ENCODE measurements at regions of chr11 and their contacts with region 1.

Region 1: DNA sequence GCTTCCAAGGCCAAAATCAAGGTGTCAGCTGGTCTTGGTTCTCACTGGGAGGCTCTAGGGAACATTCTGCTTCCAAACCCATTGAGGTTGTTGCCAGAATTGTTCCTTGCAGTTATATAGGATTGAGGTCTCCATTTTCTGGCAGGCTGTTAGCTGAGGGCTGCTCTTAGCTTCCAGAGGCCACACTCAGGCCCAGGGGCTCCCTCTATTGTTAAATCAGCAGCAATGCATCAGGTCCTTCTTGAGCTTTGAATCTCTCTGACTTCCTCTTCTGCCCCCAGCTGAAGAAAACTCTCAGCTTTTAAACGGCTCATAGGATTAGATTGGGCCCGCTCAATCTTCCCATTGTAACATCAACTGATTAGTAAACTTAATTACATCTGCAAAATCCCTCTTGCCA is 39.3 kb upstream of the BSX start:
- DNase-seq: peak in 1 of 10 donors; percentile 13

Region 2: DNA sequence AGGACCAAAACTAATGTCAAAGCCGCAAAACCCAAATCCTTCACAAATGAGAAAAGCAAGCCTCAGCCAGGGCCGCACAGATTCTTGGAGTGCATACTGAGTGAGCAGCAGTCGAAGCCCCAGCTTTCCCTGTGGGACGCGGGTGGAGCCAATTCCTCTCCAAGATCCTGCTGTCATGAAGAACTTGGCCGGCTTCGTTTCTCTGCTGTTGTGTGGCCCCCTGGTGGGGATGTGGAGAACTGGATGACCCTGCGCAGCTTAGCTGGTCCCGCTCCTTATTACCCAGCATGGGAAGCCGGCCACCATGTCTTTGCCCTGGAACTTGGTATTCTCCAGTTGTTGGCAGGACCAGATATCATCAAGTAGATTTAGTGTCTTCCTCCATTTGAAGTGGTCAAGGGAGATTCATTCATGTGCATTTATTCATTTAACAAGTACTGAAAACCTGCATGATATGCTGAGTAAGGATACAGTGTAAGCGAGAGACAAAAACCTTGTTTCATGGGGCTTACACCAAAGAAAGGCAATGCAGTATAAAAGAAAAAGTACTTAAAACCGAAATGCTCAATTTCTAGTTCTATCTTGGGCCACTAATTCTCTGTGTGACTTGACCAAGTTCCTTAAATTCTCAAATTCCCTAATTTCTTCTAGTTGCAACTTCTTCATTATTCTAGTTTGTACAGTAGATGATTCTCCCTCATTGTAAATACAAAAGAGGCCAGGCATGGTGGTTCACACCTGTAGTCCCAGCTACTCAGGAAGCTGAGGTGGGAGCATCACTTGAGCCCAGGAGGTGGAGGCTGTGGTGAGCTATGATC is 239.4 kb before region 1 on chr11:
- intact Hi-C with region 1: no loop called
- DNase-seq: peak; percentile 73 to 98 (median 89)

Region 3: DNA sequence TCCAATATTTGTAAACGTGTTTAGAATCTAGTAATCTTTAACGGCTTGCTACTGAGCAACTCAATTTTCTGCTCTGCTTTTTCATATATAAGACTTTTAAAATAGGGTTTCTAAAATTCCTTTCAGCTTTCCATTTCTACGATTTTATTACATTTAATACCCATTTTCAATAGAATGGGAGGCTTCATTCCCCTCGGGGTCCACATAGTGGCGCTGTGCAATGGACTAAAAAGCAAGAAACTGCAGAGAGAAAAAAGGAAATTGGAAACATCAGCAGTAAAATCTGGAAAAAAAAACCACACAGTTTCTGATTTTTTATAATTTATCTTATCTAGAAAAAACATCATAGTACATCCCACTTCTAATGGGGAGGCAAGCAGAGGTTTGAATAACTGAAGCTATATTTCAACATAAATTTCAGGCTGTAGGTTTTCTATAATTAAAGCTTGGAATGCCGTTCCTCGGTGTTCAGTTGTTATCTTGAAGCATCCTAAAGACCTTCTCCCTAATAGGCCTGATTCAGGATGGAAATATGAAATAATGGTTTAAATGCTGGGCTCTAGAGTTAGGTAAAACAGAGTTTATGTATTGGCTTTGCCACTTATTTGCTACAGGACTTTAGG is 157.2 kb before region 1 on chr11:
- intact Hi-C with region 1: loop called (anchors 2 kb)
- DNase-seq: peak in 9 of 10 donors; percentile 33 to 92 (median 56)

Region 4: DNA sequence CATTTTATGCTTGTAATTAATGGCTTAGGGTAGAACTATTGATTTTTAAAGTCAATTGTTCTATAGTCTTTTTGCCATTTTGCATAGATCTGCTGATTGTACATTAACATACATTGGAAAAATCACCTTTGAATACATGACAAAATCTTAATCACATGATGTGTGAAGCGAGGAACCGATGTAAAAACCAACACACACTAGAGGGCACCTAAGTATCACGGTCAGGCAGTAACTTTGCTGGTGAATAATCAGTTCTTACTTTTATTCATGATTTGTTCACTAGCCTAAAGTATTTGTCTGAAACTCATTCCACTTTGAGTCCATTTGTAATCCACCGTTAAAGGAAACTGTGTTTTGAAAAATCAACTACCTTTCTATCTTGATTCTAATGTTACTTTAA is 110.2 kb before region 1 on chr11:
- intact Hi-C with region 1: loop called (anchors 5 kb)
- DNase-seq: no peak

Region 5: DNA sequence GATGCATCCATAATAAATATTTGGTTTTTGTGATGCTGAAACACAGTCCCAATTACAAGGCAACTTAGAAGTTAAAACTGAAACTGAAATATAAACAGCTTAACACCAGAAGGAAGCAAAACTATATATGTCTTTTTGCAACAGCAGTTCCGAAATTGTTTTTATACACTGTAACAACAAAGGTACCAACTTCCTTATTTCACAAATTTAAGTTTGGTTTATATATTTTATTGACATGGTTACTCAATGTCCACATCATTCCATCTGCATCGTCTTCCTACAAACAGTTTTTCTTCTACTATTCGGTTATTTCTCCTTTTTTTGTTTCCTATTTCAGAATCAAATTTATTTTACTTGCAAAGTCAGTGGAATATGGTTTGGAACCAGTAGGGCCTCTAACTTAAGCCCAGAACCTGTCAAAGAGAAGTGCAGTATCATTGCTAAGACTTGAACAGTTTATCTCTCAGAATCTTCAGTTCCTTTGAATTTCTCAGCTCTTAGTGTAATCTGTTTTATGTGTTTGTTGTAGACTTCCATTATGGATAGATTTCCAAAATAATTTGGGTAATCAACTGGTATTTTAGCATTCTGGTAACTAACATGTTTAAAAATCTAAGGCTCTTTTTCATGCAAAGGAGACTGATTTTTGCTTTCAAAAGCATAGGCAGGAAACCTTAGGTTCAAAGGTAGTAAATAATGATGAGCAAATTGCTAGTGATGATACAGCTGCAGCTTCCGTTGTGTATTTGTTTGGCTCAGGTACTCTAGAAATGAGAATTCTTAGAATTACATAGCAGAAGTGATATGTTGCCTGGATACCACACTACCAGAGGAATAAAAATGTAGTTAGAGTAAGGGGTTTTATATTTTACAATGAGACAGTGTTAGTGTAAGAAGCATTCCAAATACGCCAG is 49.2 kb after region 1 on chr11:
- intact Hi-C with region 1: no loop called
- DNase-seq: no peak

Measured in posterior cingulate gyrus (tissue), 11 donors.